ENCODE measurements at regions of chr9 and their contacts with region 1.

Region 1: GRCh38 chr9:91089405-91090129 is 272.2 kb downstream of the AUH start:
- DNase-seq: peak; percentile 74
- H3K4me3 ChIP-seq: no peak overlapping the region
- H3K27ac ChIP-seq: no peak overlapping the region
- H3K4me1 ChIP-seq: peaks cover 0 to 7% (median 0%) of the 10 kb centered on the region in 4 donors
- H3K27me3 ChIP-seq: no peaks in the 10 kb centered on the region
- CTCF ChIP-seq: peak; percentile 32 to 59 (median 37)
- EP300 ChIP-seq: no peak
- POLR2A ChIP-seq: no peak

Region 2: DNA sequence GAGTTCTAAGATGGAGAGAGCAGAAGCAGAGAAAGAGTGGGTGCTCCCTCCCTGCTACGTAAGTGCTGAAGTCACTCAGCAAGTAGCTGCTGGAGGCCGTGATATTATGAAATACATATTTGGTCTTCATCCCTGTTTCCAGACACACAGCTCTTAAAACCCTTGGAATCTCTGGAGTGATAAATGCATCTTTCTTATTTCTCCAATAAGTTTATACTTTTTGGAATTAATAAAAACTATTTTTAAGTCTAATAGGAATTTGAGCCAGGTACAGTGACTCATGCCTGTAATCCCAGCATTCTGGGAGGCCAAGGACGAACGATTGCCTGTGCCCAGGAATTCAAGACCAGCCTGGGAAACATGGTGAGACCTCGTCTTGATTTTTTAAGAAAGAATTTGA is 211.6 kb after region 1 on chr9:
- intact Hi-C with region 1: loop called (anchors 5 kb)
- DNase-seq: peak; percentile 79
- H3K4me3 ChIP-seq: no peak overlapping the region
- H3K27ac ChIP-seq: peak overlapping the region; percentile 69 to 86 (median 78)
- H3K4me1 ChIP-seq: peaks cover 0 to 63% (median 43%) of the 10 kb centered on the region in 4 donors
- H3K27me3 ChIP-seq: no peaks in the 10 kb centered on the region
- CTCF ChIP-seq: no peak
- EP300 ChIP-seq: peak in 1 of 4 donors; percentile 14
- POLR2A ChIP-seq: no peak

Region 3: GRCh38 chr9:91361291-91362050 is 271.9 kb after region 1 on chr9 and contains the start of gene AUH:
- intact Hi-C with region 1: loop called (anchors 10 kb)
- DNase-seq: peak; percentile 92
- H3K4me3 ChIP-seq: peak within 1 kb of the TSS; percentile 75 to 99 (median 98)
- H3K27ac ChIP-seq: peak within 1 kb of the TSS; percentile 89 to 90 (median 90)
- H3K4me1 ChIP-seq: peaks cover 0 to 36% (median 18%) of the 10 kb centered on the region in 4 donors
- H3K27me3 ChIP-seq: no peaks in the 10 kb centered on the region
- CTCF ChIP-seq: peak in 1 of 4 experiments; percentile 9
- EP300 ChIP-seq: no peak
- POLR2A ChIP-seq: no peak
- total RNA-seq, gene AUH: 27.1 to 36.4 (median 28.1) TPM